ENCODE measurements at regions of chr13 and their contacts with region 1.

Region 1: GRCh38 chr13:91398413-91399272 is at the start of gene GPC5:
- DNase-seq: peak; percentile 71 to 93
- ATAC-seq: peak; percentile 94
- H3K4me3 ChIP-seq: peak within 1 kb of the TSS; percentile 1 to 33
- H3K27ac ChIP-seq: no peak within 1 kb of the TSS
- H3K4me1 ChIP-seq: no peaks in the 10 kb centered on the region
- H3K27me3 ChIP-seq: no peaks in the 10 kb centered on the region
- total RNA-seq, gene GPC5: 0.97 to 1.5 TPM

Region 2: DNA sequence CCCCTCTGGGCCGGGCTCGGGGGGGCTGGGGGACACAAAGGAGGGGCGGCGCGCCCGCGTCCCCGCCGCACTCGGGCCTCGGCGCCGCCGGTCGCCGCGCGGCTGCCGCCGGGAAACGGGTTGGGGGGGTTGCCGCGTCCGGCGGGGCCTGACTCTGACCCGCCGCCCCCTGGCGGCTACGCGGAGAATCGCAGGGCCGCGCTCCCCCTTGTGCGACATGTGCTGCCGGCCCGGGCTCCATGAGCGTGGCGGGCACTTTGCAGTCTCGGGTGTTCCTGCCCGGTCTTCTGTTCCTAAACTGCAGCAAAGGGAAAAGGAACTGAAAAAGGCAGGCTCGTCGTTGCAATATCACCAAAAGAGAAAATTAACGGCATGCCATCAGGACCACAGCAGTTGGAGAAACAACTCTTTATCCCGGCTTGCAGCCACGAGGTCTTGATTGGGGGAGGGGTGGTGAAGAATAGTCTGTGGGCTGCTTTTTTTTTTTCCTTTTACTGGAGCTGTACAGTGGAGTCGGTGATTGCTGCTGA is 49.7 kb before region 1 on chr13:
- intact Hi-C with region 1: loop called in 1 of 2 experiments (anchors 5 kb)
- DNase-seq: peak; percentile 95 to 98
- ATAC-seq: peak; percentile 95
- H3K4me3 ChIP-seq: peak overlapping the region; percentile 88 to 100
- H3K27ac ChIP-seq: peak overlapping the region in 1 of 2 donors; percentile 73
- H3K4me1 ChIP-seq: peaks cover 0 to under 1% of the 10 kb centered on the region in 2 donors
- H3K27me3 ChIP-seq: no peaks in the 10 kb centered on the region

Region 3: DNA sequence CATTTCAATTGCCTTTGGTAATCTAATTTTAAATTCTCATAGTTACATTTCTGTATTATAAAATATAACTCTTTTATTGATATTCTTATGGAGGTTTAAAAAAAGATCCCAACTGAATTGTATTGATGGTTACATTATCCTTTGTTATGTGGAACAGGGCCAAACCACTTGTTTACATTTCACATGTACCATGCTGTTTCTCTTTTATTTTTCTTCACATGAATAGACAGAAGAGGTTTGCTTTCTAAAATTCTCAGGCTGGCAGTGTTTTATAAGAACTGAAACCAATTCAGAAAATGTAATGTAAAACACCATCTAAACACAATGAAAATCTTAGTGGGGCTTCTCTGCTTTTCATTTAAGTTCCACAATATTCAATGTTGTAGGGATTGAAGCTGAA is 122.3 kb after region 1 on chr13:
- intact Hi-C with region 1: no loop called
- DNase-seq: no peak
- ATAC-seq: no peak
- H3K4me3 ChIP-seq: no peak overlapping the region
- H3K27ac ChIP-seq: no peak overlapping the region
- H3K4me1 ChIP-seq: no peaks in the 10 kb centered on the region
- H3K27me3 ChIP-seq: peaks cover 0 to 3% of the 10 kb centered on the region in 2 donors

Measured in aorta (tissue), 5 donors.